ENCODE measurements at regions of chr2 and their contacts with region 1.

Region 1: GRCh38 chr2:20661067-20661980 is 5.6 kb upstream of the GDF7 start:
- DNase-seq: peak; percentile 82
- H3K4me3 Mint-ChIP-seq: no peak overlapping the region
- H3K27ac Mint-ChIP-seq: no peak overlapping the region
- H3K4me1 Mint-ChIP-seq: peaks cover 7% of the 10 kb centered on the region
- H3K27me3 Mint-ChIP-seq: peaks cover 45% of the 10 kb centered on the region
- CTCF ChIP-seq: peak; percentile 96

Region 2: DNA sequence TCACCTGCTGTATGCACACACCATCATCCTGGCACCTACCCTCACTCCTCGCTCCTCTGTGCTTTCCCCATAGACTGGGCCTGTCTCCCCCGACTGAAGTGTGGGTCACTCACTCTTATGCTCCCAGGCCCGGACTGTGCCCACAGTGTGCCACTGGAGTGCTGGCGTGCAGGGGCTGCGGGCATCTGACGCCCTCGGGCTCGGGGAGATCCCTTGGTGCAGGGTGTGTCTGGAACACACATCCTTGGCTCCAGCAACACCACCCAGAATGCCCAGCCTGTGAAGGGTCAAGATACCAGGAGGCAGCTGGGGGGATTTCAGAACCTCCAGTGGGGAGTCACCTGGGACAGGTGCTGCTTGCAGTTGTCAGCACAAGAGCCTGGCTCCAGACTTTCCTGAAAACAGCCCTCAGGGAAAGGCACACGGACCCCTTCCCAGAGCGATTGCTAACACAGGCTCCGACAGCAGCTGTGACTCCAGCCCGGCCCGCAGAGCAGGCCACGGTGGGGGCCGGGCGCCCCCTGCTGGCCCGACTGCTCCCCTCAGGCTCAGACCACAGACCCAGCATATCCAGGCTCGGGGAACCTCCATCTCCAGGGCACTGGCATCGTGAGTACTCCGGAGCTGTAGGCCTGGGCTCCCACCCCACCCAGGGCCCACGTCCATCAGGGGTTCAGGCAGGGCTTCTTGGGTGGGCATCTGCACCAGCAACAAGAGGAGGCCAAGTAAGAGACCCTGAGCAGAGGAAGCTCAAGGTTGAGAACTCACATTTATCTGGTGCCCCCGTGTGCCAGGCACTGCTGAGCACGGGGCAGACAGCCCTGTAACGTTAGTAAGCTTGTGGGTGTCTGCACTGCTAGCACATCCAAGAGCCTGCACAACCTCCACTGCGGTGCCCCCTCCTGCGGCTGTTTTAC is 19.0 kb before region 1 on chr2:
- CTCF ChIA-PET with region 1: interaction called, 14 read pairs
- POLR2A ChIA-PET with region 1: no interaction called
- intact Hi-C with region 1: no loop called
- DNase-seq: peak; percentile 70
- H3K4me3 Mint-ChIP-seq: no peak overlapping the region
- H3K27ac Mint-ChIP-seq: no peak overlapping the region
- H3K4me1 Mint-ChIP-seq: peaks cover 17% of the 10 kb centered on the region
- H3K27me3 Mint-ChIP-seq: no peaks in the 10 kb centered on the region
- CTCF ChIP-seq: peak; percentile 91

Region 3: DNA sequence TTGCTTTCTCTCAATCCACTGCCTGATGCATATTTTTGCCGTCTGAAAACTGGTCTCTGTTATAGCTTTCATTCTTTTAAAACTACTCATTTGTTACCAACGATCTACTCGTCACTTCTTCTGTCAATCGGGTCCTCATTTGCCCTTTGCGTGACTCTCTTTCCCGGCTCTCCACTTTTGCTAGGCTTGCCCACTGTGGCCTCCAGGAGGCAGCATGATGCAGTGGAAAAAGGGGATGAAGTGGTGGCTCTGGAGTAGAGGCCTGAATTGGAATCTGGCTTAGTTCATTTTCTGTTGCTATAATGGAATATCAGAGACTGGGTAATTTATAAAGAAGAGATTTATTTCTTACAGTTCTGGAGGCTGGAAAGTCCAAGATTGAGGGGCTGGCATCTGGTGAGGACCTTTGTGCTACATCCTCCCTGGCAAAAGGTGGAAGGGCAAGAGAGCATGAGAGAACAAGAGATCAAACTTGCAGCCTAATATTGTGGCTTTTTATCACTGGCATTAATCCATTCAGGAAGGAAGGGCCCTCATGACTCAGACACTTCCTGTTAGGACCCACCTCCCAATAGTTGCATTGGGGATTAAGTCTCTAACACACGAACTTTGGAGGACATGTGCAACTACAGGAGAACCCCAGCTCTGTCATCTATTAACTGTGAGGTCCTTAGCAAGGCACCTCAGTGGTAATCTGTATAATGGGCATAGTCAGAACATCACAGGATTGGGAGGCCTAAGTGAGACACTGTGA is 21.0 kb after region 1 on chr2:
- CTCF ChIA-PET with region 1: interaction called, 127 read pairs
- POLR2A ChIA-PET with region 1: no interaction called
- intact Hi-C with region 1: no loop called
- DNase-seq: no peak
- H3K4me3 Mint-ChIP-seq: no peak overlapping the region
- H3K27ac Mint-ChIP-seq: no peak overlapping the region
- H3K4me1 Mint-ChIP-seq: no peaks in the 10 kb centered on the region
- H3K27me3 Mint-ChIP-seq: no peaks in the 10 kb centered on the region
- CTCF ChIP-seq: no peak

Region 4: GRCh38 chr2:20755132-20755800 is 93.9 kb after region 1 on chr2:
- CTCF ChIA-PET with region 1: interaction called, 10 read pairs
- POLR2A ChIA-PET with region 1: no interaction called
- intact Hi-C with region 1: no loop called
- DNase-seq: no peak
- H3K4me3 Mint-ChIP-seq: no peak overlapping the region
- H3K27ac Mint-ChIP-seq: no peak overlapping the region
- H3K4me1 Mint-ChIP-seq: no peaks in the 10 kb centered on the region
- H3K27me3 Mint-ChIP-seq: no peaks in the 10 kb centered on the region
- CTCF ChIP-seq: no peak

Region 5: GRCh38 chr2:20953145-20953824 is 292.0 kb after region 1 on chr2:
- CTCF ChIA-PET with region 1: interaction called, 26 read pairs
- POLR2A ChIA-PET with region 1: no interaction called
- intact Hi-C with region 1: no loop called
- DNase-seq: no peak
- H3K4me3 Mint-ChIP-seq: no peak overlapping the region
- H3K27ac Mint-ChIP-seq: no peak overlapping the region
- H3K4me1 Mint-ChIP-seq: no peaks in the 10 kb centered on the region
- H3K27me3 Mint-ChIP-seq: no peaks in the 10 kb centered on the region
- CTCF ChIP-seq: no peak

Region 6: DNA sequence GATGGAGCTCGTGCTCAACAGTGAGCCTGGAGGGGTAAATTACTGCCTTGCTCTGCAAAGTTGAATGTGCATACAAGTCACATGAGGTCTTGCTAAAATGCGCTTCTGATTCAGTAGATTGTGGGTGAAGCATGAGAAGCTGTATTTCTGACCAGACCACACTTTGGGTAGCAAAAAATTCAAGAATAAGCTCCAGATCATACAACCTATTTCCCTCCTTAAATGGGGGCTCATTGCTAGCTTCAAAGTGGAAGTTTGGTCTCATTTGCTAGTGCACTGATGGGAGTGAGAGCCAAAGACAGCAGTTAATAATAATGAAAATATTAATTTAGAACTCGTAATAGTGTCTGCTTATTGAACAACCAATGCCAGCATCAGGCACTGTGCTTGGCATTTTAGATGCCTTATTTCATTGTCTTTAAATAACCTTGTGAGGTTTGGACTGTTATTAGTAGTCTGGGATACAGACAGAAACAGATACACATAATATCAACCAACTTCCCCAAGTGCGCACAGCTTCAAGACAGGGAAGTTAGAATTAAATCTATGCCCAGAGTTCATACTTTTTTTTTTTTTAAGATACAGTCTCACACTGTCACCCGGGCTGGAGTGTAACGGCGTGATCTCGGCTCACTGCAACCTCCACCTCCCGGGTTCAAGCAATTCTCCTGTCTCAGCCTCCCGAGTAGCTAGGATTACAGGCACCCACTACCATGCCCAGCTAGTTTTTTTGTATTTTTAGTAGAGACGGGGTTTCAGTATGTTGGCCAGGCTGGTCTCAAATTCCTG is 364.6 kb after region 1 on chr2:
- CTCF ChIA-PET with region 1: interaction called, 38 read pairs
- POLR2A ChIA-PET with region 1: no interaction called
- intact Hi-C with region 1: loop called (anchors 1 kb)
- DNase-seq: no peak
- H3K4me3 Mint-ChIP-seq: no peak overlapping the region
- H3K27ac Mint-ChIP-seq: no peak overlapping the region
- H3K4me1 Mint-ChIP-seq: no peaks in the 10 kb centered on the region
- H3K27me3 Mint-ChIP-seq: peaks cover 24% of the 10 kb centered on the region
- CTCF ChIP-seq: no peak

Region 7: DNA sequence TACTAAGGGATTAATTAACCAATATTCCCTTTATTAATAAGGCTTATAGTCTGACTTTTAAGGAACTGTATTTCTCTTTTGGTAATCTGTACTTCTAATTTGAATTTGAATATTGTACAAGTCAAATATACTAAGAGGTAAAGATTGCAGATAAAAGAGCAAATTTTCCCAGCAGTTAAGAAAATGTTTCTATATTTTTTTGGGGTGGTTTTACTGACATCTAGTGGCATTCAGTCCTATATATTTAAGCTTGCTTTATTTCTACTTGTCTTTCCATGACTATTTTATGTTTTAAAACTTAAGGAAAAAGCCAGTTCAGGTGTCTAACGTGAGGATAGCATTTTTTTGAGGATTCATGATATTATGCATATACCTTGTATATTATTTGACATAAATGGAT is 504.0 kb after region 1 on chr2:
- CTCF ChIA-PET with region 1: interaction called, 13 read pairs
- POLR2A ChIA-PET with region 1: no interaction called
- intact Hi-C with region 1: loop called (anchors 2 kb)
- DNase-seq: no peak
- H3K4me3 Mint-ChIP-seq: no peak overlapping the region
- H3K27ac Mint-ChIP-seq: no peak overlapping the region
- H3K4me1 Mint-ChIP-seq: no peaks in the 10 kb centered on the region
- H3K27me3 Mint-ChIP-seq: peaks cover 21% of the 10 kb centered on the region
- CTCF ChIP-seq: peak; percentile 21

Measured in MCF 10A (cell line).